ENCODE measurements at regions of chr10 and their contacts with region 1.

Region 1: DNA sequence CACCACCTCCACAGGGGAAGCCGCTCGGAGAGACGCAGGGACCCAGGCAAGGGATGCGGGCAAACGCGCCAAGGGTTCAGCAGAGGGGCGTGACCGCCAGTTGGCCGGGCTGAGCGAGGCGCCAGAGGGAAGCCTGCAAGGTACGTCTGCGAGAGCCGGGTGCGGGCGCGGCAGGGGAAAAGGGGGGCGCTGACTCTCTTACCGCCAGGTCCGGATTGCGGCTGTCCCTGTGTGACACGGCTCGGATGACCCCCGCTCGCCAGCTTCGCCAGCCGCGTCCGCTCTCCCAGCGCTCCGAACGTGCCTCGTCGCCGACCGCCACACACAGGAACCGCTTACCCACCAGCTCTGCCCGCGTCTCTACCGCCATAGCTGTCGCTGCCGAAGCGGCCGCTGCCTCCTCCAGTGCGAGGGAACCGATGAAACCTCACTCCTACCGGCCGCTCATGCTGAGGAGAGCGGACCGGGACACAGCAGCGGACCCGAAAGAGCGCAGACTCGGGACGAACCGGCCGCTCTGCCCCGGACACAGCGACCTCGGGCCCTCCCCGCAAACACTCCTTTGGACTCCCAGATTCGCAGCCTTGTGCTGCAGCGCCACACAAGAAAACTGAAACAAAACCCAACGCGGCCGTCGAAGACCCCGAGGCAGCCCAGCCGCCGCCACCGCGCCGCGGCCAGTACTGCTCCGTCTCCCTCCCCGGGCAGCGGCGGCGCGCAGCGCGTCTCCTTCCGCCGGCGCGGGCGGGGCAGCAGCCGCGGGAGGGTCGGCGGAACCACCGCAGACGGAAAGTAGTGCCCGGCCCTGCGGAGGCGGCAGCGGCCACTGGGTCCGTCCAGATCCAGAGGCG is at the start of gene JMJD1C:
- DNase-seq: peak; percentile 89 to 95
- H3K4me3 ChIP-seq: peak within 1 kb of the TSS; percentile 96
- H3K4me3 Mint-ChIP-seq: peak within 1 kb of the TSS; percentile 100
- H3K27ac Mint-ChIP-seq: peak within 1 kb of the TSS; percentile 100
- H3K4me1 ChIP-seq: 0 out of 2 replicates have a peak, but pooled peaks cover 11% of the 10 kb centered on the region
- H3K4me1 Mint-ChIP-seq: peaks cover 44% of the 10 kb centered on the region
- H3K27me3 ChIP-seq: no peaks in the 10 kb centered on the region
- H3K27me3 Mint-ChIP-seq: no peaks in the 10 kb centered on the region
- CTCF ChIP-seq: peak in 1 of 2 experiments; percentile 6
- total RNA-seq, gene JMJD1C: 89.7 and 95.7 TPM in 2 replicates

Region 2: DNA sequence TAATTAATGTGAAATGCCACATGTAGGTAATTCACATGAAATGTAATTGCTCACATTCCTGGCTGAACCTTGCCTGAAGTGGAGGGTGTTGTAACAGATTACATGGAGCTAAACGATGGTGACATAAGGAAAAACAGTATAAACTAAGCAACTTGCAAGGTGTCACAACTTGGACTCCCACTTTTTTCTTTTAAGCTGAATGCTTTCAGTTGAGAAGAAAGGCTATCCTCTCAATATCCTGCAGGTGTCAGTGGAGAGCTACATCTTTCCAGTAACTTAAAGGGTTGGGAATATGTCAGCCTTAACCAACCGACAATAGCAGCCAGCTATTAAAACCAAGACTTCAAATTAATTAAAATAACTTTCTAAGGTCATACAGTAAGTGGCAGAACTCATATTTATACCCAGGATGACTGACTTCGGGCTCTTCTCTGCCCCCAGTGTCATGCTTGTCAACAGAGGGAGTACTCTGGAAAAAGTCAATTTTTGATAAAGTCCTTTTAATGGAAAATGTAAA is 298.7 kb before region 1 on chr10:
- CTCF ChIA-PET with region 1: interaction called, 3 read pairs
- POLR2A ChIA-PET with region 1: no interaction called
- intact Hi-C with region 1: loop called (anchors 5 kb)
- DNase-seq: peak in 1 of 2 experiments; percentile 80
- H3K4me3 ChIP-seq: no peak overlapping the region
- H3K4me3 Mint-ChIP-seq: no peak overlapping the region
- H3K27ac Mint-ChIP-seq: no peak overlapping the region
- H3K4me1 ChIP-seq: no peaks in the 10 kb centered on the region
- H3K4me1 Mint-ChIP-seq: peaks cover 6% of the 10 kb centered on the region
- H3K27me3 ChIP-seq: no peaks in the 10 kb centered on the region
- H3K27me3 Mint-ChIP-seq: no peaks in the 10 kb centered on the region
- CTCF ChIP-seq: peak; percentile 92 to 94

Region 3: DNA sequence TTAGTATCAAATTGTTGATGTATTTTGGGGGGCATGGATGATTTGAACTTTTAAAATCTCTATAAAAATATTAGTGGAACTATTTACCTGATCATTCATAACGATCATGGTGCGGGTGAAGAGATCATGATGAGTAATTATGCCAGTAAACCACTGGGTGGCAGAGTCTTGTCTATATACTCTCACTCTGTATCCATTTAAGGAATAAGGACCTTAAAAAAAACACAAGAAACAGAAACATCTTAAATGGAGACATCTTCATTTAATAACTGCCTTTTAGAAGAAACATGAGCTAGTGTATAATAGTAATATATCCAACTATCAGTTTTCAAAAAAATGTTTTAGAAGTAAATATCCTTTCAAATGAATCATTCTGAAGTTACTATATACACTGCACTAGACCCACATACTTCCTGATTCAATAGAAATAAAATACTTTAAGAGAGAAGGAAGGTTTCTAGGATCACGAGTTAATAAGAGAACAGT is 248.4 kb before region 1 on chr10:
- CTCF ChIA-PET with region 1: no interaction called
- POLR2A ChIA-PET with region 1: no interaction called
- intact Hi-C with region 1: loop called (anchors 2 kb)
- DNase-seq: peak in 1 of 2 experiments; percentile 64
- H3K4me3 ChIP-seq: no peak overlapping the region
- H3K4me3 Mint-ChIP-seq: no peak overlapping the region
- H3K27ac Mint-ChIP-seq: no peak overlapping the region
- H3K4me1 ChIP-seq: no peaks in the 10 kb centered on the region; the same call in 1 of the 2 replicates
- H3K4me1 Mint-ChIP-seq: no peaks in the 10 kb centered on the region
- H3K27me3 ChIP-seq: no peaks in the 10 kb centered on the region
- H3K27me3 Mint-ChIP-seq: no peaks in the 10 kb centered on the region
- CTCF ChIP-seq: peak; percentile 74 to 78

Region 4: DNA sequence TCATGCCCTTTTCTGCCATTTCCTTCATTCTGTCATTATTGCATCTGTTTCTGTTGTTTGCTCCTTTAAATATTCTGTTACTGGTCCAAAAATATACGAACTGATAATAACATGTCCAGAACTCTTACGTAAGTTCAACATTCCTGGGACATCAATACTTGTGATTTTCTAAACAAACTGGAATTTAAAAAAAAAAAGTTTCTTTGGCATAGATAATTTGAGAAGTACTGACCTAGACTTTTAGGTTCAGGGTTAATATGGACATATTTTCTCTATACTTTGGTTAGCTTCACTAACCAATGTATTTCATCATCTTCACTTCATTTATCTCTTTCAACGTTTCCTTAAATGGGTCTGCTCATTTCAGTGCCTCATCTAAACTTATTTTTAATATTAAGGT is 147.0 kb before region 1 on chr10:
- CTCF ChIA-PET with region 1: no interaction called
- POLR2A ChIA-PET with region 1: no interaction called
- intact Hi-C with region 1: no loop called
- DNase-seq: no peak
- H3K4me3 ChIP-seq: no peak overlapping the region
- H3K4me3 Mint-ChIP-seq: no peak overlapping the region
- H3K27ac Mint-ChIP-seq: peak overlapping the region; percentile 3
- H3K4me1 ChIP-seq: peaks cover 6% of the 10 kb centered on the region
- H3K4me1 Mint-ChIP-seq: peaks cover 29% of the 10 kb centered on the region
- H3K27me3 ChIP-seq: no peaks in the 10 kb centered on the region
- H3K27me3 Mint-ChIP-seq: no peaks in the 10 kb centered on the region
- CTCF ChIP-seq: no peak

Region 5: GRCh38 chr10:63365976-63366765 is 99.3 kb before region 1 on chr10:
- CTCF ChIA-PET with region 1: no interaction called
- POLR2A ChIA-PET with region 1: interaction called, 3 read pairs
- intact Hi-C with region 1: loop called (anchors 2 kb)
- DNase-seq: peak in 1 of 2 experiments; percentile 44
- H3K4me3 ChIP-seq: no peak overlapping the region
- H3K4me3 Mint-ChIP-seq: no peak overlapping the region
- H3K27ac Mint-ChIP-seq: peak overlapping the region; percentile 21
- H3K4me1 ChIP-seq: peaks cover 36% of the 10 kb centered on the region
- H3K4me1 Mint-ChIP-seq: peaks cover 42% of the 10 kb centered on the region
- H3K27me3 ChIP-seq: no peaks in the 10 kb centered on the region
- H3K27me3 Mint-ChIP-seq: no peaks in the 10 kb centered on the region
- CTCF ChIP-seq: no peak

Region 6: GRCh38 chr10:63504125-63504880 is 38.8 kb after region 1 on chr10:
- CTCF ChIA-PET with region 1: no interaction called
- POLR2A ChIA-PET with region 1: no interaction called
- intact Hi-C with region 1: no loop called
- DNase-seq: peak in 1 of 2 experiments; percentile 40
- H3K4me3 ChIP-seq: no peak overlapping the region
- H3K4me3 Mint-ChIP-seq: peak overlapping the region; percentile 11
- H3K27ac Mint-ChIP-seq: peak overlapping the region; percentile 43
- H3K4me1 ChIP-seq: peaks cover 32% of the 10 kb centered on the region
- H3K4me1 Mint-ChIP-seq: peaks cover 40% of the 10 kb centered on the region
- H3K27me3 ChIP-seq: no peaks in the 10 kb centered on the region
- H3K27me3 Mint-ChIP-seq: no peaks in the 10 kb centered on the region
- CTCF ChIP-seq: no peak

Region 7: DNA sequence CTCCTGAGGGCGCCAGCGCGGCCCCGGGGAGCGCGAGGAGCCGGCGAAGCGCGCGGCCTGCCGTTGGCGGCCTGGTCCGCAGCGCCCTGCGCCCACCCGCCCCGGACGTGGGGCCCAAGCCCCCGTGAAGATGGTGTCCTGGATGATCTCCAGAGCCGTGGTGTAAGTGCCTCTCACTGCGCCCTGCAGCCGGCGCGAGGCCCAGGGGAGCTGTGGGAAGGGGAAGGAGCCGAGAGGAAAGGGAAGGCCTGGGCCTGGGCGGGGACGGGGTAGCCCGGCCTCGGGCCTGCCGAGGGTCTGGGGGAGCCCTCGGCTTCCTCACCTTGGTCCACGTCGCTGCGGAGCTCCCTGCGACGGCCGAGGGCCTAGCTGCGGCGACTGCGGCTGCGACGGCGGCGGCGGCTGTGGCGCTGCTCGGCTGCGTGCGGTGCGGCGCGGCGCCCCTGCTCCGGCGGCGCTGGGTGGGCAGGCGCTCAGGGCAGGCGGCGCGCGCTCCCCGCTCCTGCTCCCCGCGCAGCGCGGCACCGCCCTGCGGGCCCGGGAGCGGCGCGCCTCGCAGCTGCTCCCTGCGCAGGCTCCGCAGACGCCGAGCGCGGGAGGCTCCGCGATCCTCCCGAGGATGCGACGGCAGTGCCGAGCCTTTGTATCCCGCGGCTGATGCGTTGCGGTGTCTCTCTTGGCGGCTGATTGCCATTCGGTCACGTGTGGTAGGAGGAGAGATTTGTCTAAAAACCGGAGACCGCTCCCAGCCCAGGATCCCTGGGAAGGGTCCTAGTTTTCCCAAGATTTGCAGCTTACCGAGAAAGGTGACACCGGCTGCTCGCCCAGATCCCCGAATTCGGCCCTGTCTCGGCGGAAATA is 56.1 kb after region 1 on chr10:
- CTCF ChIA-PET with region 1: no interaction called
- POLR2A ChIA-PET with region 1: interaction called, 3 read pairs
- intact Hi-C with region 1: loop called (anchors 1 kb)
- DNase-seq: peak; percentile 79 to 86
- H3K4me3 ChIP-seq: peak overlapping the region; percentile 96
- H3K4me3 Mint-ChIP-seq: peak overlapping the region; percentile 83
- H3K27ac Mint-ChIP-seq: peak overlapping the region; percentile 92
- H3K4me1 ChIP-seq: peaks cover 17% of the 10 kb centered on the region
- H3K4me1 Mint-ChIP-seq: peaks cover 43% of the 10 kb centered on the region
- H3K27me3 ChIP-seq: no peaks in the 10 kb centered on the region
- H3K27me3 Mint-ChIP-seq: no peaks in the 10 kb centered on the region
- CTCF ChIP-seq: no peak

Measured in Caco-2 (cell line).